ENCODE measurements at regions of chr1 and their contacts with region 1.

Region 1: DNA sequence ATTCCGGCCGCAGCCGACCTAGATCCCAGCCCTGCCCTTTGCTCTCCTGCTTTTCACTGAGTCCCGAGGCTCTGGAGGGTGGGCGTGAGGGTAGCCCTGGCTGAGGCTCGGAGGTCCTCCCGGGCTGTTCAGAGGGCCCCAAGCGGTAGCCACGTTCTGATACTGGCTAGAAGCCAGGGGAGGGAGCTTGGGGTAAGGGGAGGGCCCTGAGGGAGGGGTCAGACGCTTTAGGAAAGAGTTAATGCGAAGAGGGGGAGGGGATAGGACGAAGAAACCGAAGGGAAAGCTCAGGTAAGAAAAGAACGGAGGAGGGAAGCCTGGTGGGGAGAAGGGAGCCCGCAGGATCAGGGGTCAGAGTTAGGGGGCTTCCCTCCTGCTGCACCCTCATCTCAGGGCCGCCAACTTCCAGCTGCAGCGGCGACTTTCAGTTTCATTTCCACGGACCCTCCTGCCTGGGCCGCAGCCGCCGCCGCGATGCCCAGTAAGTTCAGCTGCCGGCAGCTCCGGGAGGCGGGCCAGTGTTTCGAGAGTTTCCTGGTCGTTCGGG is at the start of gene MOV10:
- DNase-seq: peak; percentile 91
- ATAC-seq: peak; percentile 68
- total RNA-seq, gene MOV10: 16.1 TPM

Region 2: DNA sequence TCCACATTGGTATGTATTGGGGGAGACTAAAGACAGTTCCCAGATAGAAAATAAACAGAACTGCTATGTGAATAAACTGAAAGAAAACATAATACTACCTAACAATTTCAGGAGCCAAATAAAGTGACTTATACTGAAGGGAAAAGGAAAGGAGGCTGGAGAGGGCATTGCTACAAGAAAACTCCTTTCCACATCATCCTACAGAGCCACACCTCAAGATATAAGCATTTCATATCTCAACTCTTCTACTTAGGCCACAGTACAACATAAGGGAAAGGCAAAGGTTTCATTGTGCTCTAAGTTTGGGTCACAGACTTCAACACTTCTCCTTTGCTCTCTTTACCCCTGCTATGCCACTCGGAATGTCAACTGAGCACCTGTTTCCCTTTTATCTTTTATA is 110.4 kb before region 1 on chr1:
- intact Hi-C with region 1: no loop called
- DNase-seq: no peak
- ATAC-seq: no peak

Region 3: GRCh38 chr1:112700290-112701226 is 26.0 kb after region 1 on chr1:
- intact Hi-C with region 1: loop called (anchors 2 kb)
- DNase-seq: peak; percentile 97
- ATAC-seq: peak; percentile 79

Region 4: DNA sequence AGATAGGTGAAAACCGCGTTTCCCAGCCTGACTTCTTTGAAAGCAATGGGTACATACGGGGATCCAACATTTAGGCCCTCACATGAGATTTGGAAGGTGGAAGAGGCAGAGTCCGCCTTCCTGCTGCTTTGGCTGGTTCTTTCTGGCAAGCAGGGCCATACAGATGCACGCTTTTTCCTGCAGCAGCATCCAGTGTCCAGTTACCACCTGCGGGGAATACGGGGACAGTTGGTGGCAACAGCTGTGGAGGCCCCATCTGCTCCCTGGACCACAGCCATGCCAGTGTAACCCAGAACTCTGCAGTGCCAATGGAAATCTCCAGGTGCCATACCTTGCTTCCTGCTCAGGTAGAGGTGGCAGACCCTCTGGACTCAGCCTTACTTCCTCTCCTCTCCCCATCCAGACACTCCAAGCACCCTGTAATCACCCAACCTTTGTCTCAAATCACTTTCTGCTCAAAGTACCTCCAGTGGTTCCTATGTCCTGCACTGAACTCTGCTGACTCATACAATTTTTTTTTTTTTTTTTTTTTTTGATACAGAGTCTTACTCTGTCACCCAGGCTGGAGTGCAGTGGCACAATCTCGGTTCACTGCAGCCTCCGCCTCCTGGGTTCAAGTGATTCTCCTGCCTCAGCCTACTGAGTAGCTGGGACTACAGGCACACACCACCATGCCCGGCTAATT is 213.2 kb after region 1 on chr1:
- intact Hi-C with region 1: no loop called
- DNase-seq: no peak
- ATAC-seq: no peak

Measured in Right ventricle myocardium inferior (tissue), 1 donor.